A673 (cell line): ENCODE measurements at regions of chr9 and their contacts with region 1.

Region 1: GRCh38 chr9:114653556-114654159 is 3.9 kb downstream of the TEX53 start:
- DNase-seq: peak; percentile 85
- H3K4me3 ChIP-seq: no peak overlapping the region
- H3K27ac ChIP-seq: no peak overlapping the region
- H3K4me1 ChIP-seq: no peaks in the 10 kb centered on the region
- H3K27me3 ChIP-seq: no peaks in the 10 kb centered on the region
- CTCF ChIP-seq: peak; percentile 93

Region 2: DNA sequence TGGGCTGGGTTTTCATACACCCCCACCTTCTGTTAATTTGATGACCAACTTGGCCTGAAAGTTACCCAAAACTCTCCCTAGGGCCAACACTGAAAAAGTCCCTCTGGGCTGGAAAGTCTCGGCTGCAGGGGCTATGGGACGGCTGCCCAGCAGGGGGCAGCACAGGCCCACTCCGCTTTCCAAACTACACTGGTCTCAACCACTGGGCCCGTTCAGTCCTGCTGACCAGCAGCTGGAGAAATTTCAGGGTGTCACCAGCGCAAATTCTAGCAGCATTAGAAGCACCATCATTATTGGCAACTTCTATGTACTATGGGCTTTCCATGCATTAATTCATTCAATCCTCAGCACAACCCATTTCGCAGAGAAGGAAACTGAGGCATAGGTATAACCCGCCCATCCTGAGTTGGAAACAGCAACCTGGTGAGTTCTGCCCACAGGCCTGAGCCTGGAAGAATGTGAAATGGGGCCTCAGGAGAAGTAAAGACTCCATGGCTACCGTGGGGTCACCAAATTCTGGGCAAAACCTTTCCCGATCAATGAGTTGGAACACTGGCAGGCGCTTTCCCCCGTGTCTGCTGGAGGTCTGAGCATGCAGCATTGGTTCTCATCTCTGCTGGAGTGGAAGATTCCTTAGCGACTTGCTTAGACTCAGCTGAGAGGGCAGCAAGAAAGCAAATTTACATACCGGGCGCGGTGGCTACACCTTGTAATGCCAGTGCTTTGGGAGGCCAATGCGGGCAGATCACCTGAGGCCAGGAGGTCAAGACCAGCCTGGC is 314.3 kb before region 1 on chr9:
- CTCF ChIA-PET with region 1: interaction called, 5 read pairs
- POLR2A ChIA-PET with region 1: no interaction called
- intact Hi-C with region 1: loop called (anchors 1 kb)
- DNase-seq: peak; percentile 57
- H3K4me3 ChIP-seq: no peak overlapping the region
- H3K27ac ChIP-seq: no peak overlapping the region
- H3K4me1 ChIP-seq: no peaks in the 10 kb centered on the region
- H3K27me3 ChIP-seq: no peaks in the 10 kb centered on the region
- CTCF ChIP-seq: peak; percentile 88

Region 3: GRCh38 chr9:114405294-114406034 is 248.2 kb before region 1 on chr9:
- CTCF ChIA-PET with region 1: interaction called, 59 read pairs
- POLR2A ChIA-PET with region 1: no interaction called
- intact Hi-C with region 1: loop called (anchors 1 kb)
- DNase-seq: peak; percentile 88
- H3K4me3 ChIP-seq: no peak overlapping the region
- H3K27ac ChIP-seq: no peak overlapping the region
- H3K4me1 ChIP-seq: no peaks in the 10 kb centered on the region
- H3K27me3 ChIP-seq: no peaks in the 10 kb centered on the region
- CTCF ChIP-seq: peak; percentile 84

Region 4: GRCh38 chr9:114434878-114435311 is 218.8 kb before region 1 on chr9:
- CTCF ChIA-PET with region 1: interaction called, 4 read pairs
- POLR2A ChIA-PET with region 1: no interaction called
- intact Hi-C with region 1: loop called (anchors 1 kb)
- DNase-seq: peak; percentile 29
- H3K4me3 ChIP-seq: no peak overlapping the region
- H3K27ac ChIP-seq: no peak overlapping the region
- H3K4me1 ChIP-seq: no peaks in the 10 kb centered on the region
- H3K27me3 ChIP-seq: no peaks in the 10 kb centered on the region
- CTCF ChIP-seq: peak; percentile 61

Region 5: DNA sequence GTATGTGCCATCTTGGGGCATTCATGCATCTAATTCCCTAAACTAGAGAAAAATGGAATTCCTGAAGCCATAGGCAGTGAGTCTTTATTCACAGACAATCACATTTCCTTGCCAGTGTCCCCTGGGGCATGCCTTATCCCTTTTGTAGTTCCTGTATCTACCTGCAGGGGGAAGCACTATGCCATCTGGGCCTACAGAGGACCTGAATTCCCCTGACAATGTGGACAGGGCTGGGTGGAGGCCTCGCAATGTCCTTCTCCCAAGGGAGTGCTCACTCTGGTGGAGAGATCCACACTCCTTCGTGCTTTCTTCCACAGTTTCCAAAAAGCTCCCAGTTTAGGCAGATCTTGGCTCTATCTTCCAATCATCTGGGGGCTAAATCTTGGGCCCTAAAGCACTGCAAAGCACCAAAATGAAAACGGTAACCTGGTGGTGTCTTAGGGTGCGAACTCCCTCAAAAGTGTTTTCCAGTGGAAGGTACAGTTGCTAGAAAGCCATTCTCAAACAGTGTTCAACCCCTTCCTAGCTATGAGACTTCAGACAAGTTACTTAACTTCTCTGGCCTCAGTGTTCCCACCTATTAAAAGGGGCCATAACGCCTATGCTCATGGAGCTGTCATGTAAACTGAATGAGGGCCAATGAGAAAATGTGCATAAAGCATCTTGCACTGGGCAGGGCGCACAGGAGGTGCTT is 165.9 kb before region 1 on chr9:
- CTCF ChIA-PET with region 1: interaction called, 6 read pairs
- POLR2A ChIA-PET with region 1: no interaction called
- intact Hi-C with region 1: loop called (anchors 1 kb)
- DNase-seq: peak; percentile 89
- H3K4me3 ChIP-seq: no peak overlapping the region
- H3K27ac ChIP-seq: no peak overlapping the region
- H3K4me1 ChIP-seq: no peaks in the 10 kb centered on the region
- H3K27me3 ChIP-seq: no peaks in the 10 kb centered on the region
- CTCF ChIP-seq: peak; percentile 85

Region 6: DNA sequence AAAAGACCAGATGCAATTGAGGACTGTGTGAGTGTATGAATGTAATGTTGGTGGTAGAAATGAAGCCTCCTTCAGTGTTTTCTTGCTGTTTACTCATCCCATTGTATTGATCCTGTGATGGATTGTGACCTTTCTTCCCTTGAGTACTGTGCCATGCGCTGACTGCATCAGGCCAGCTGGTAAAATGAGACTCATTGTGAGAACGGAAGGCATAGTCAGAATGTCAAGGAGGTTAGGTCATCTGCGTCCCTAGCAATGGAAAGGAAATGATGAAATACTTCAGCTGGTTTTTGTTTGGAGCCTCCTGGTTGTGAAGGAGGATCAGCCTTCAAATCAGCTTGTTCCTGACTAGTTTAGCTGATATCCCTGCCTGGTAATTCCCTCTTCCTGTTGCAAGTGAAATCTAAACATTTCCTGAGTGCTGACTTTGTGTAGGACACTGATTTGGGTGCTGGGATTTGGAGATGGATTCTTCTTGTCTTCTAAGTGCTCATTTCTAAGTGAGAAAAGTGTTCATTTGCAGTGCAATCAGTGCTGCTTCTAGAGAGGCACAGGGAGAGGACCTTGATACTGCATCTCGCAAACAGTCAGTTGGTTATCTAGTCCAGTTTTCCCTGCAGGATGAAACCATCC is 241.3 kb after region 1 on chr9:
- CTCF ChIA-PET with region 1: interaction called, 10 read pairs
- POLR2A ChIA-PET with region 1: no interaction called
- intact Hi-C with region 1: no loop called
- DNase-seq: peak; percentile 72
- H3K4me3 ChIP-seq: no peak overlapping the region
- H3K27ac ChIP-seq: peak overlapping the region; percentile 33
- H3K4me1 ChIP-seq: peaks cover 19% of the 10 kb centered on the region
- H3K27me3 ChIP-seq: no peaks in the 10 kb centered on the region
- CTCF ChIP-seq: no peak